ENCODE measurements at regions of chr1 and their contacts with region 1.

Region 1: GRCh38 chr1:8409106-8409505 is 91.2 kb downstream of the SLC45A1 start:
- DNase-seq: peak; percentile 53
- H3K4me3 ChIP-seq: no peak overlapping the region
- H3K27ac ChIP-seq: no peak overlapping the region
- H3K4me1 ChIP-seq: peaks cover 9% of the 10 kb centered on the region
- H3K27me3 ChIP-seq: no peaks in the 10 kb centered on the region
- CTCF ChIP-seq: peak; percentile 54

Region 2: GRCh38 chr1:8197493-8198282 is 211.4 kb before region 1 on chr1:
- CTCF ChIA-PET with region 1: no interaction called
- dilution Hi-C with region 1: no loop called
- in situ Hi-C with region 1: no loop called
- intact Hi-C with region 1: no loop called
- DNase-seq: peak; percentile 94
- H3K4me3 ChIP-seq: no peak overlapping the region
- H3K27ac ChIP-seq: peak overlapping the region; percentile 25
- H3K4me1 ChIP-seq: peaks cover 45% of the 10 kb centered on the region
- H3K27me3 ChIP-seq: no peaks in the 10 kb centered on the region
- CTCF ChIP-seq: no peak

Region 3: GRCh38 chr1:8396786-8397406 is 12.2 kb before region 1 on chr1:
- CTCF ChIA-PET with region 1: interaction called, 20 read pairs
- dilution Hi-C with region 1: no loop called
- in situ Hi-C with region 1: no loop called
- intact Hi-C with region 1: loop called (anchors 2 kb)
- DNase-seq: peak; percentile 98
- H3K4me3 ChIP-seq: no peak overlapping the region
- H3K27ac ChIP-seq: peak overlapping the region; percentile 79
- H3K4me1 ChIP-seq: peaks cover 26% of the 10 kb centered on the region
- H3K27me3 ChIP-seq: no peaks in the 10 kb centered on the region
- CTCF ChIP-seq: no peak

Region 4: DNA sequence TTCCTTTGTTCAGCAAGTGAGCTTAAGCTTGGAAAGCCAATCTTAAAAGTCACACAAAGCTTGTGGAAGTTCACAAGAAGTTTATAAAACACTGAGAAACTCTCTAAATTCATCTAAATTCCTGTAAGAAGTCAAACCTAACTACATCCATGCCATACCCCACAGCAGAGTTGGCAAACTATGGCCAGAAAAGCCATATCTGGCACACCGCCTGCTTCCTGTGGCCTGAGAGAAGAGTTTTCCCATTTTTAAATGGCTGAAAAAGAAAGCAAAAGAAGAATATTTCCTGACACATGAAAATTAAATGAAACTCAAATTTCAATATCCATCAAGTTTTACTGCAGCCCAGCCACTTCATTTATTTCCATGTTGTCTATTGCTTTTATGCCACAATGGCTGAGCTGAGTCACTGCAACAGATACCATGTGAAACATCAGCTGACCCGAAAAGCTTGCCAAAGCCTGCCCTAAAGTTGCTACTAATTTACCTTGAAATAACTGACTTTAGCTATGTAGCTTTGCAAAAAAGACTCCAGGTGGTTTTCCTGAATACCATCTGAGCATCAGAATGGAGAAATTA is 145.9 kb after region 1 on chr1:
- CTCF ChIA-PET with region 1: interaction called, 10 read pairs
- dilution Hi-C with region 1: no loop called
- in situ Hi-C with region 1: no loop called
- intact Hi-C with region 1: no loop called
- DNase-seq: peak; percentile 69
- H3K4me3 ChIP-seq: no peak overlapping the region
- H3K27ac ChIP-seq: no peak overlapping the region
- H3K4me1 ChIP-seq: peaks cover 9% of the 10 kb centered on the region
- H3K27me3 ChIP-seq: no peaks in the 10 kb centered on the region
- CTCF ChIP-seq: no peak

Region 5: DNA sequence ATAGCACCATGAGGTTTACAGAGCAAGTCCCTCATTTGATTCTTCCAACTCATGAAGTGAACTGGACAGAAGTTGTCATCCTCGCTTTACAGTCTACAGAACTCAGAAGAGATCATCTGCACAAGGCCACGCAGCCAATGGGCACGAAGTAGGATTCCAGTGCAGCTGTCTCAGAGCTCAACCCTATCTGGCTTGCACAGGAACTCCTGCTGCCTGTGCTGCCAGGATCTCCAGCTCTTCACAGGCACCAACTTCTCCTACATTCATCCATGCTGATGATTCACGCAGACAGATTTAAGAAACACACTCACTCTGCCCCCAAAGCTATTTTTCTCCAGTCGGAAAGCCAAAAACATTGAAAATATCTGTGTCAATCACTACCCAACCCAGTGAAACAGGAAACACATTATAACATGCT is 251.3 kb after region 1 on chr1:
- CTCF ChIA-PET with region 1: interaction called, 10 read pairs
- dilution Hi-C with region 1: no loop called
- in situ Hi-C with region 1: no loop called
- intact Hi-C with region 1: no loop called
- DNase-seq: peak; percentile 77
- H3K4me3 ChIP-seq: no peak overlapping the region
- H3K27ac ChIP-seq: peak overlapping the region; percentile 60
- H3K4me1 ChIP-seq: peaks cover 29% of the 10 kb centered on the region
- H3K27me3 ChIP-seq: no peaks in the 10 kb centered on the region
- CTCF ChIP-seq: no peak

Region 6: DNA sequence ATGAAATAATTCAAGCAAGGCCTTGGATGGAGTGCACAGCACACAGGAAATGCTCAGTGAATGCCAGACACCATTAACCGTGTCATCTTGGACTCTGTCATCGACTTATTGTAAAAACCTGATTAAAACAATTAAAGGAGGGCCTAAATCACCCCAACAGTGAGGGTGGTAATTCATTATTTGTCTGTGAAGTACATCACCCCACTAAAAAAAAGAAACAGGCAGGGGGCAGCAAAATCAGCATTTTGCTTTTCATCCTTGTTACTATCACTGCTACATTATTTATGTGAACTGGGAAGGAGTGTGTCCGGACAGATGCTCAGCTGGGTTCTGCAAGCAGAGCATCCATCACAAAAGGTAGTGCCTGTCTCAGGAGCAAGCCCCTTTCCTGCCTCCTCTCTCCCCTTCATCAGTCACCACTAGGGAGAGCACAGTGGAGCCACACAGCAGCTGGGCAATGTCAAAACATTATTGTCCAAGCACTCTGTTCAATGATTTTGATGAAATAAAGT is 309.8 kb after region 1 on chr1:
- CTCF ChIA-PET with region 1: interaction called, 23 read pairs
- dilution Hi-C with region 1: no loop called
- in situ Hi-C with region 1: no loop called
- intact Hi-C with region 1: no loop called
- DNase-seq: no peak
- H3K4me3 ChIP-seq: no peak overlapping the region
- H3K27ac ChIP-seq: no peak overlapping the region
- H3K4me1 ChIP-seq: no peaks in the 10 kb centered on the region
- H3K27me3 ChIP-seq: no peaks in the 10 kb centered on the region
- CTCF ChIP-seq: peak in 1 of 2 donors; percentile 23

Measured in mammary epithelial cell (primary cell).